Motor neuron (in vitro differentiated cells): ENCODE measurements at regions of chr12 and their contacts with region 1.

Region 1: DNA sequence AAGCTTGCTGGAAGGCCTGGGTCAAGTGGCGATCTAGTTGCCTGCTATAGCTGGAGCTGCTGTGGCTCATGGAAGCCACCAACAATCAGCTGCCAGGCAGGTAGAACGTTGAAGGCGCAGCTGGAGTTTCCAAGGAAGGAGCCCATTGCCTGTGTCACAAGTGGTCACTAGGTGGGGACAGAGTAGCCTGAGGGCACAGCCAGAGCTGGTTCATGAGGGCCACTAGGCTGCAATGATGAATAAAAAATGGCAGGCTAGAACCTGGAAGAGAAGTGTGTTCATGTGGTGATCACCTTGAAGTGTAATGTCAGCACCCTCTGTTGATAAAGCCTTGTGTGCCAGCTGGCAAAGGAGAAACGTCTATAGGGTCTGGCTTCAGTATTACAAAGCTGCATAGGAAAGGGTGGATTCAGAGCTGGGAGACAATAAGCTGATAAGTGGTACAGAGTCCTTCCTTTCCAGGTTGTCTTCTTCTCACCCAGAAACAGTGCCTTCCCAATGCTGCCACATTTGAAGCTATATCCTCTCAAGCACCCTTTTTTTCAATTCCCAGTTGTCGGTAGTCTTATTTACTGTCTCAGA is 165.8 kb downstream of the EMP1 start:
- ATAC-seq: peak in 5 of 8 experiments; percentile 41 to 97 (median 87)
- H3K4me3 ChIP-seq: no peak overlapping the region
- H3K27ac ChIP-seq: no peak overlapping the region
- H3K4me1 ChIP-seq: no peaks in the 10 kb centered on the region

Region 2: DNA sequence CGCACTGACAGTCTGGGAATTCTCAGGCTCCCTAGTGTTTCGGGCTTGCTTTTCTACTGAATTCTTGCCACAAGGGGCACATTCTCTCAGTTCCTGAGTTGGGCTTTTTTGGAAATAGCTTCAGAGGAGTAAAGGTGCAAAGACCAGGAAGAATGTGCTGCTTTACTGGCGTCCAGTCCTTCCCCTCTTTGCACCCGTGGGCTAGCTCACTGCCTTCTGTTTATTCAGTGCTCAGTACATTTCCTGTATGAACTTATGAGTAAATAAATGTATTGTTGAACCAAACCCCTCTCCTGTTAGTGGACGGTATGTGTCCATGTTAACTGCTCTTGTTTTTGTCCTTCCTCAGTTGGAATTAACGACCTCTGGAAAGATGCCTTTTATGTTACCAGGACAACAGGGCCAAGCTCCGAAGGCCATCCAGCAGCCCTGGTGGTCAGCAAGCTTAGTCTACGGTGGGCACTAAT is 282.9 kb before region 1 on chr12:
- in situ Hi-C with region 1: no loop called
- ATAC-seq: no peak
- H3K4me3 ChIP-seq: no peak overlapping the region
- H3K27ac ChIP-seq: no peak overlapping the region
- H3K4me1 ChIP-seq: no peaks in the 10 kb centered on the region

Region 3: DNA sequence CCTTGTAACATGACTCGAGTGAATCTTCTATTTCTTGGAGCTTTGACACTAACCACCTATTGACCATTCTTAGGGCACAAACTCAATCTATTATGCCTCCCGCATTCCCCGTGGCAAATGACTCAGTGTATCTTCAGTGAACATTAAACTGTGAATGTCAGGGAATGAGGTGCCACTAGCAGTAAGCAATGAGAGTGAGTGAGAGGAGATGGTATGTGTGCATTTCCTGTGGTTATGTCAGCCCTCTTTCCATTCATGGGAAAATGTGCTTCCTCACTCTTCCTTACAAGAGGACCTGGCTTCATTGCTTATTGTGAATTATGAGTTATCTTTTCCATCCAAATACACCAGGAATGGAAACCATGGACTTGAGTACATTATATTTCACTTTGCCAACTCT is 63.4 kb after region 1 on chr12:
- in situ Hi-C with region 1: loop called in 1 of 9 experiments (anchors 10 kb)
- ATAC-seq: peak in 2 of 8 experiments; percentile 53 to 92
- H3K4me3 ChIP-seq: no peak overlapping the region
- H3K27ac ChIP-seq: no peak overlapping the region
- H3K4me1 ChIP-seq: no peaks in the 10 kb centered on the region

Region 4: GRCh38 chr12:13504074-13504473 is 141.7 kb after region 1 on chr12:
- in situ Hi-C with region 1: loop called in 1 of 9 experiments (anchors 25 kb)
- ATAC-seq: peak in 3 of 8 experiments; percentile 23 to 62 (median 29)
- H3K4me3 ChIP-seq: no peak overlapping the region
- H3K27ac ChIP-seq: no peak overlapping the region
- H3K4me1 ChIP-seq: peaks cover 15 to 23% of the 10 kb centered on the region in 2 donors